CD8-positive, alpha-beta T cell (primary cell): ENCODE measurements at regions of chr7 and their contacts with region 1.

Region 1: GRCh38 chr7:157273208-157274093 is 63.4 kb upstream of the DNAJB6 start:
- DNase-seq: peak; percentile 32 to 80 (median 62)
- ATAC-seq: peak; percentile 92
- H3K4me3 ChIP-seq: no peak overlapping the region
- H3K4me3 Mint-ChIP-seq: no peak overlapping the region
- H3K27ac ChIP-seq: peak overlapping the region in 1 of 2 experiments; percentile 8
- H3K27ac Mint-ChIP-seq: peak overlapping the region; percentile 72
- H3K4me1 ChIP-seq: peaks cover 21% of the 10 kb centered on the region
- H3K4me1 Mint-ChIP-seq: peaks cover 24% of the 10 kb centered on the region
- H3K27me3 ChIP-seq: peaks cover 0 to 3% of the 10 kb centered on the region in 2 experiments
- H3K27me3 Mint-ChIP-seq: peaks cover 2% of the 10 kb centered on the region
- CTCF ChIP-seq: peak; percentile 90

Region 2: GRCh38 chr7:157329447-157329846 is 56.0 kb after region 1 on chr7:
- CTCF ChIA-PET with region 1: no interaction called
- POLR2A ChIA-PET with region 1: no interaction called
- intact Hi-C with region 1: loop called in 1 of 2 experiments (anchors 5 kb)
- DNase-seq: no peak
- ATAC-seq: no peak
- H3K4me3 ChIP-seq: no peak overlapping the region
- H3K4me3 Mint-ChIP-seq: no peak overlapping the region
- H3K27ac ChIP-seq: no peak overlapping the region
- H3K27ac Mint-ChIP-seq: no peak overlapping the region
- H3K4me1 ChIP-seq: no peaks in the 10 kb centered on the region
- H3K4me1 Mint-ChIP-seq: no peaks in the 10 kb centered on the region
- H3K27me3 ChIP-seq: no peaks in the 10 kb centered on the region
- H3K27me3 Mint-ChIP-seq: peaks cover 2% of the 10 kb centered on the region
- CTCF ChIP-seq: no peak